Activated T-helper 1 cell treated with anti-CD3 and anti-CD28 coated beads, Interleukin-12 subunit alpha, Interleukin-12 subunit beta, Interleukin-2, Interleukin-4 antibody, amounts not matched to agents 30 ng/mL and 10 ng/mL and 1 ng/mL, durations not matched to agents 14 hours and 24 hours and 36 hours (primary cell): ENCODE measurements at regions of chr10 and their contacts with region 1.

Region 1: DNA sequence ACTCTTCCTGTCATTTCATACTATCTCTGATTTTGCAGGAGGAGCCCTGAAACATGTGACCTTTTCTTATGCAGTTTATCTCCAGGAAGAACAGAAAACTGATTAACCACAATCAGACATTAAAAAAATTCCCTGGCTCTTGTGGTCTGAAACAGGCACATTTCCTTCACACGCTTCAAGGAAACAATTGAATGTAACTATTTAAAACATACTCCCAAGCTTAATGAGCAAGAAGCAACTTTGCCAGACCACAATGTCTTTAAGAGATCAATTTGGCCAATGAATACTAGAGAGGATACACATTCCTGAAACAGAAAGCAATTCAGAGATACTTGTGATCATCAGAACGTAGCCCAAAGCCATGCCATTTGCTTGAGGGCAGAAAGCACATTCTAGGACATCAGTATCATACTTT is 65.8 kb downstream of the PIP4K2A start:
- DNase-seq: no peak
- H3K4me3 Mint-ChIP-seq: peak overlapping the region; percentile 75
- H3K27ac Mint-ChIP-seq: peak overlapping the region; percentile 96
- H3K4me1 Mint-ChIP-seq: peaks cover 91% of the 10 kb centered on the region
- H3K27me3 Mint-ChIP-seq: no peaks in the 10 kb centered on the region

Region 2: DNA sequence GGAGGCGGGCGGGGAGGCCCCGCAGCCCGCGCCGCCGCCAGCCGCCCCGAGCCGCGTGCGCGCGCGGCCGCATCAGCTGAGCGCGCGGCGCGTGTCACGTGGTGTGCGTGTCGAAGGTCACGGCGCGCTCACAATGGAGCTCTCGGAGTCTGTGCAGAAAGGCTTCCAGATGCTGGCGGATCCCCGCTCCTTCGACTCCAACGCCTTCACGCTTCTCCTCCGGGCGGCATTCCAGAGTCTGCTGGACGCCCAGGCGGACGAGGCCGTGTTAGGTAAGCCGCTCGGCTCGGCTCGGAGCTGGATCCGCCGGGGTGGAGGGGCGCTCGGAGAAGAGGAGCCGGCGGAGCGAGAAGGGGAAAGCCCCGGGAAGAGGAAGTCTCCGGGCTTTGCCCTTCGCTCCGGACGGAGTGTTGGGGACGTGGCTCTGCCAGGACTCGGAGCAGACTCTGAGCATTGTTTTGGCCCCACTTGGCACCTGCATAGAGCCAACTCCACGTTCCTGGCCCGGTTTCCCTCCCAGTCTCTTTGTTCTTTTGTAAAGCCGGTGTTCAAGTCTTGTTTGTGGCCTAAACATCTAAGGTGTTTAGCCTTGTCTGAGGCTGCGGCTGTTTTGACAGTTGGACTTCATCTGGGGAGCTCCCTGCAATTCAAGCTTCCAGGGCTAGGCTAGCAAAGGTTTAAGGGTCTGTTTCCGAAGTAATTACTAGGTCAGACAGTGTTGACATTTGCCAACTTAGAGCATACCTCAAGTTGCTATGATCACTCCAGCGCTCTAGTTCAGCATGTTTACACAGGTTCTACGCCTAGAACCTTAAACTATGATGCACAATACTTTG is 332.1 kb before region 1 on chr10 and contains the start of gene COMMD3:
- intact Hi-C with region 1: loop called (anchors 5 kb)
- DNase-seq: peak; percentile 77
- H3K4me3 Mint-ChIP-seq: peak within 1 kb of the TSS; percentile 98
- H3K27ac Mint-ChIP-seq: peak within 1 kb of the TSS; percentile 100
- H3K4me1 Mint-ChIP-seq: peaks cover 50% of the 10 kb centered on the region
- H3K27me3 Mint-ChIP-seq: peaks cover 2% of the 10 kb centered on the region
- total RNA-seq, gene COMMD3: 78.7 and 84.4 TPM in 2 replicates

Region 3: GRCh38 chr10:22345301-22346095 is 303.1 kb before region 1 on chr10 and contains the start of gene SPAG6:
- intact Hi-C with region 1: no loop called
- DNase-seq: peak; percentile 68
- H3K4me3 Mint-ChIP-seq: peak within 1 kb of the TSS; percentile 72
- H3K27ac Mint-ChIP-seq: peak within 1 kb of the TSS; percentile 68
- H3K4me1 Mint-ChIP-seq: peaks cover 22% of the 10 kb centered on the region
- H3K27me3 Mint-ChIP-seq: peaks cover 63% of the 10 kb centered on the region
- total RNA-seq, gene SPAG6: 0.18 TPM in 1 of 2 replicates, not detected in the other

Region 4: GRCh38 chr10:22505911-22506685 is 142.5 kb before region 1 on chr10:
- intact Hi-C with region 1: no loop called
- DNase-seq: peak; percentile 12
- H3K4me3 Mint-ChIP-seq: peak overlapping the region; percentile 1
- H3K27ac Mint-ChIP-seq: no peak overlapping the region
- H3K4me1 Mint-ChIP-seq: peaks cover 8% of the 10 kb centered on the region
- H3K27me3 Mint-ChIP-seq: peaks cover 27% of the 10 kb centered on the region

Region 5: DNA sequence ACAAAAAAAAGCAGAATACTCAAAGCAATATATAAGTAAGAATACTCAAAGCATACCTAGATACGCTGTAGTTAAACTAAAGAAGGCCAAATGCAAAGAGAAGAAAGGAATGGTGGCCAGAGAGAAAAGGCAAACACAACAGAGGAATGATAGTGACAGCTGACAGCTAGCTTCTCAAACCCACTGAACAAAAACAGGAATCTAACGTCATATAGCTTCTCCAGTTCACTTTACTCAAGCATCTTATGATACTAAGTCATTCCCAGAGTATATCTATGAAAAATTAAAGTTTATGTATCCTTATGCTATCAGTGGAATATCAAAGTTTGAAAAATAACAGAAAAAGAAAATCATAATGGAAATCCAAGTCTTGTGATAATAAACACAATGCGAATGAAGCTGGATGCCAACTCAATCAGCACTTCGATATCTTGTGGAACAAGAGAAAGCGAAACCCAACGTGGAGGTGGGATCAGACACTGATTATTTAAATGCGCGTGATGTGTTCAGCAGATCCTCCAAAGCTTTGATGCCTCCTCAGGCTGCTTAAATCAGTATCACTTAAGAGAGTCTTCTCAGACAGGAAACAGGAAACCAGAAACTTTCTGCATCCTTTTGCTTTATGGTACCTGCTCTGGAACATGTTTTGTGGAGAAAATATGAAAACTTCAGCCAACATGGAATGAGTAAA is 37.0 kb before region 1 on chr10:
- intact Hi-C with region 1: loop called (anchors 1 kb)
- DNase-seq: peak; percentile 72
- H3K4me3 Mint-ChIP-seq: peak overlapping the region; percentile 38
- H3K27ac Mint-ChIP-seq: peak overlapping the region; percentile 21
- H3K4me1 Mint-ChIP-seq: peaks cover 90% of the 10 kb centered on the region
- H3K27me3 Mint-ChIP-seq: no peaks in the 10 kb centered on the region

Region 6: DNA sequence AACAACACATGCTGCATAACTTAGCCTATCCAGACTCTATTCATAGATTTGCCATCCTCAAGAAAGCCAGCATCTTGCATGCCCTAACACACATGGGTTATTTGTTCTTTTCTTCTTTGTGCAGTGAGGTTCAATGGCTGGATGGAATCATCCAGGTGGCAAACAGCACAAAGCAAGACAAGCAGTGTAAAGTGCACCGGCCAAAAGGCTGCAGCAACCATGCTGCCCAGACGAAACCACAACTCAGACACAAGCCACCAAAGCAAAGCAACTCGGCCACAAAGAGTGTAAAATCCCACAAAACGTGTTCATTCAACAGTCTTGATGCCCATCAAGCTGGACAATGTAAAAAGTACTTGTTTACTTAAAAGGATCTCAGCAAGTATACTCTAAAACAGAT is 11.1 kb before region 1 on chr10:
- intact Hi-C with region 1: no loop called
- DNase-seq: no peak
- H3K4me3 Mint-ChIP-seq: no peak overlapping the region
- H3K27ac Mint-ChIP-seq: no peak overlapping the region
- H3K4me1 Mint-ChIP-seq: peaks cover 59% of the 10 kb centered on the region
- H3K27me3 Mint-ChIP-seq: no peaks in the 10 kb centered on the region

Region 7: GRCh38 chr10:22666287-22667092 is 17.9 kb after region 1 on chr10:
- intact Hi-C with region 1: loop called (anchors 1 kb)
- DNase-seq: peak; percentile 57
- H3K4me3 Mint-ChIP-seq: peak overlapping the region; percentile 74
- H3K27ac Mint-ChIP-seq: peak overlapping the region; percentile 85
- H3K4me1 Mint-ChIP-seq: peaks cover 66% of the 10 kb centered on the region
- H3K27me3 Mint-ChIP-seq: no peaks in the 10 kb centered on the region